ENCODE measurements at regions of chr14 and their contacts with region 1.

Region 1: GRCh38 chr14:57182760-57183503 is 85.8 kb downstream of the EXOC5 start:
- DNase-seq: peak; percentile 66 to 71
- H3K4me3 ChIP-seq: no peak overlapping the region
- H3K4me1 ChIP-seq: peaks cover 5% of the 10 kb centered on the region
- H3K27me3 ChIP-seq: no peaks in the 10 kb centered on the region

Region 2: GRCh38 chr14:56491299-56492285 is 691.3 kb before region 1 on chr14:
- in situ Hi-C with region 1: loop called (anchors 5 kb)
- DNase-seq: peak; percentile 85 to 87
- H3K4me3 ChIP-seq: no peak overlapping the region
- H3K4me1 ChIP-seq: peaks cover 6% of the 10 kb centered on the region
- H3K27me3 ChIP-seq: peaks cover 5% of the 10 kb centered on the region; the same call in 1 of the 2 replicates

Region 3: GRCh38 chr14:56555921-56556570 is 626.9 kb before region 1 on chr14:
- in situ Hi-C with region 1: loop called (anchors 10 kb)
- DNase-seq: peak in 1 of 2 experiments; percentile 72
- H3K4me3 ChIP-seq: no peak overlapping the region
- H3K4me1 ChIP-seq: peaks cover 5% of the 10 kb centered on the region
- H3K27me3 ChIP-seq: no peaks in the 10 kb centered on the region

Region 4: DNA sequence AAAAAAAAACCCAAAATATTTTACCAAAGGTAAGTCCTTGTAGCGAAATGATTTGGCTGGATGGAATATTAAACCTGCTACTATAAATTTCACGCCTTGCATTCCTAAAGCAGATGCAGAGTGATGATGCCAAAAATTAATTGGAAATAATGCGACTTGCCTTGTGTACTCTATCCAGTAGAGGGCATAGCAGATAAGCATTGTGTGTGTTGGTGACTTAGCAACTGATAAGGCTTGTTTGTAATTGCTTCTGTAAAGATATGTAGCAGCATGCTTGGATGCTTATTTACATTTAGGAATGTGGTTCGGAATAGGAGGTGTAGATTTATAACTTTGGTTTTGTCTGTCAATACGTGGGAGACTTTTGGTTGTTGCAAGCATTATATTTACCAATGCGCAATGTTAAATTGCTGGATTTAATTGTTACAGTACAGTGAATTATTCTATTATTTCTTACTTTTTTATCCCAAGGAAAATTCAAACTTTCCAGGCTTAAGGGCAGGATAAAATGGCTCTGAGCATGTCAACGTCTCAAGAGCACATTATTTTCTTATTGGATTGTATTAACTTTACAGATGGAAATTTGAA is 522.9 kb before region 1 on chr14:
- in situ Hi-C with region 1: loop called (anchors 25 kb)
- DNase-seq: peak in 1 of 2 experiments; percentile 76
- H3K4me3 ChIP-seq: no peak overlapping the region
- H3K4me1 ChIP-seq: peaks cover 22% of the 10 kb centered on the region
- H3K27me3 ChIP-seq: no peaks in the 10 kb centered on the region

Region 5: GRCh38 chr14:56816574-56817391 is 366.1 kb before region 1 on chr14:
- in situ Hi-C with region 1: loop called (anchors 25 kb)
- DNase-seq: peak in 1 of 2 experiments; percentile 63
- H3K4me3 ChIP-seq: peak overlapping the region; percentile 76
- H3K4me1 ChIP-seq: peaks cover 47% of the 10 kb centered on the region
- H3K27me3 ChIP-seq: no peaks in the 10 kb centered on the region

Measured in HAP-1 (cell line).